ENCODE measurements at regions of chr11 and their contacts with region 1.

Region 1: GRCh38 chr11:111788051-111788450 is 21.9 kb upstream of the PPP2R1B start:
- DNase-seq: no peak
- H3K4me3 ChIP-seq: no peak overlapping the region
- H3K27ac ChIP-seq: no peak overlapping the region
- H3K4me1 ChIP-seq: peaks cover 0 to 5% (median 0%) of the 10 kb centered on the region in 4 donors
- H3K27me3 ChIP-seq: no peaks in the 10 kb centered on the region
- CTCF ChIP-seq: no peak
- EP300 ChIP-seq: no peak
- POLR2A ChIP-seq: no peak

Region 2: DNA sequence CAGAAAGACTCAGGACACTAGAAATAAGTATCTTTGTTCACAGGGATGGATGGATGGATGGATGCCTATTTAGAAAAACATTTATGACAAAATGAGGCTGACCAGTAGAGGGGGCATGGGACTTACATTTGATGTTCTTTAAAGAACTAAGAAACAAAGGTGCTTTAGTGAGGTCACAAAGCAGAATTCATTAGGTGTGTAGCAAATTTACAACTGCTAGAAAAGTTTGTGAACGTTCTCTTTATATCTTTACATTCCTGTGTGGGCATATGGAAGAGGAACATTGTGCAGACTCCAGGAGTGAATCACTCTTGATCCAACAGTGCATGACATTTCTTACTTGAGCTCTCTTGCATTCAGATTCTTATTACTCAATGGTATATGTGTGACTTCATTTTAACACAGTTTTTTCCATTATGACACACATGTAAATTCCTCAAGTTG is 201.6 kb before region 1 on chr11:
- in situ Hi-C with region 1: loop called in 1 of 4 experiments (anchors 10 kb)
- intact Hi-C with region 1: no loop called
- DNase-seq: no peak
- H3K4me3 ChIP-seq: no peak overlapping the region
- H3K27ac ChIP-seq: no peak overlapping the region
- H3K4me1 ChIP-seq: no peaks in the 10 kb centered on the region
- H3K27me3 ChIP-seq: no peaks in the 10 kb centered on the region
- CTCF ChIP-seq: peak; percentile 45 to 63 (median 54)
- EP300 ChIP-seq: no peak
- POLR2A ChIP-seq: no peak